ENCODE measurements at regions of chr3 and their contacts with region 1.

Region 1: GRCh38 chr3:47420511-47421484 is 40.0 kb downstream of the PTPN23 start:
- DNase-seq: peak; percentile 89 to 93 (median 91)
- ATAC-seq: peak; percentile 86
- H3K4me3 ChIP-seq: no peak overlapping the region
- H3K27ac ChIP-seq: peak overlapping the region; percentile 12 to 66 (median 54)
- H3K4me1 ChIP-seq: peaks cover 15% of the 10 kb centered on the region
- H3K27me3 ChIP-seq: no peaks in the 10 kb centered on the region
- CTCF ChIP-seq: peak; percentile 86 to 98 (median 92)
- POLR2A ChIP-seq: peak in 1 of 3 donors; percentile 16

Region 2: GRCh38 chr3:46812237-46812791 is 608.5 kb before region 1 on chr3:
- intact Hi-C with region 1: no loop called
- DNase-seq: peak; percentile 83 to 92 (median 88)
- ATAC-seq: peak; percentile 94
- H3K4me3 ChIP-seq: peak overlapping the region; percentile 3 to 26
- H3K27ac ChIP-seq: peak overlapping the region; percentile 47 to 75 (median 68)
- H3K4me1 ChIP-seq: peaks cover 23% of the 10 kb centered on the region
- H3K27me3 ChIP-seq: no peaks in the 10 kb centered on the region
- CTCF ChIP-seq: no peak
- POLR2A ChIP-seq: peak in 1 of 3 donors; percentile 23

Region 3: DNA sequence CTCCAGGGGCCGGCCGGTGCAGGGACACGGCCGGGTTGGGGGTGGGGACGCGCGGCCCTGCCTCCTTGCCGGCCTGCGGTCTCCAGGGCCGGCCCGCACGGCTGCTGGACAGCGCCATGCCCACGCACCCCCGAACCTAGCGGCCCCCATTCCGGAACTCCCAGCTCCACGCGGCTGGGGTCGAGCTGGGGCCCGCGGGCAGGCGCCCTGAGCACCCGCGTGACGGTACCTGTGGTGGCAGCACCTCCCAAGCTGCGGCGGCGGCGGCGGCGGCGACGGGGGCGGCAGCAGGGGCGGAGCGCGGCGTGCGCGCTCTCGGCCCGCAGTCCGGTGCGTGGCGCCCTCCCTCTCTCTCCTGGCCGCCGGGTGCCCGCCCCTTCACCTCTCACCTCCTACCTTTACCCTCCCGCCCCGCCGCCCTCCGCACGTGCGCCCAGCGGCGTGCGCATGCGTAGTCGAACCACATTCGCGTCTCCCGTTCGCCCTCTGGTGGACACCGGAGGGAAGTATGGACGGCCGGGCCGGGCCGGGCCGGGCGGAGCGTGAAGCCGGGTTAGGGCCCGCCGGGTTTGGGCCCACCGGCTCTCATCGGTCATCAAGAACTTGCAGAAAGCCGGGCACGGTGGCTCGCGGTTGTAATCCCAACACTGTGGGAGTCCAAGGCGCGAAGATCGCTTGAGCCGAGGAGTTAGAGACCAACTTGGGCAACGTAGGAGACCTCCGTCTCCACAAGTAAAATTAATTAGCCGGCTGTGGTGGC is 55.0 kb after region 1 on chr3 and contains the start of gene SCAP:
- intact Hi-C with region 1: loop called (anchors 5 kb)
- DNase-seq: peak; percentile 96 to 97 (median 97)
- ATAC-seq: peak; percentile 98
- H3K4me3 ChIP-seq: peak within 1 kb of the TSS; percentile 87
- H3K27ac ChIP-seq: peak within 1 kb of the TSS; percentile 69 to 88 (median 80)
- H3K4me1 ChIP-seq: peaks cover 31% of the 10 kb centered on the region
- H3K27me3 ChIP-seq: no peaks in the 10 kb centered on the region
- CTCF ChIP-seq: peak; percentile 89 to 99 (median 94)
- POLR2A ChIP-seq: peak; percentile 20 to 77 (median 67)
- total RNA-seq, gene SCAP: 56.6 to 122 TPM

Region 4: DNA sequence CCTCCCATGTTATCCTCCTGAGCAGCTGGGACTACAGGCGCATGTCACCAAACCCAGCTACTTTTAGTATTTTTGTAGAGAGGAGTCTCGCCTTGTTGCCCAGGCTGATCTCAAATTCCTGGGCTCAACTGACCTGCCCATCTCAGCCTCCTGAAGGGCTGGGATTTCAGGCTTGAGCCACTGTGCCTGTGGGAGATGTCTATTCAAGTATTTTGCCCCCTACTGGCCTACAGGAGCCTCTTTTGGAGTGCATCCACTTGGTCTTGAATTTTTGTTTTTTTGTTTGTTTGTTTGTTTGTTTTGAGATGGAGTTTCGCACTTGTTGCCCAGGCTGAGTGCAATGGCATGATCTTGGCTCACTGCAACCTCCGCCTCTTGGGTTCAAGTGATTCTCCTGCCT is 378.9 kb after region 1 on chr3:
- intact Hi-C with region 1: loop called (anchors 10 kb)
- DNase-seq: no peak
- ATAC-seq: no peak
- H3K4me3 ChIP-seq: no peak overlapping the region
- H3K27ac ChIP-seq: no peak overlapping the region
- H3K4me1 ChIP-seq: peaks cover 15% of the 10 kb centered on the region
- H3K27me3 ChIP-seq: no peaks in the 10 kb centered on the region
- CTCF ChIP-seq: peak in 1 of 7 experiments; percentile 26
- POLR2A ChIP-seq: no peak

Measured in body of pancreas (tissue), 4 donors.